ENCODE measurements at regions of chr2 and their contacts with region 1.

Region 1: GRCh38 chr2:96960153-96960961 is 26.0 kb downstream of the FAM178B start:
- ATAC-seq: peak; percentile 89 to 100 (median 99)
- H3K4me3 ChIP-seq: no peak overlapping the region
- H3K27ac ChIP-seq: no peak overlapping the region
- H3K4me1 ChIP-seq: peaks cover 7 to 28% of the 10 kb centered on the region in 2 donors

Region 2: GRCh38 chr2:96164459-96165184 is 795.7 kb before region 1 on chr2:
- in situ Hi-C with region 1: no loop called
- ATAC-seq: peak in 5 of 8 experiments; percentile 54 to 88 (median 85)
- H3K4me3 ChIP-seq: no peak overlapping the region
- H3K27ac ChIP-seq: no peak overlapping the region
- H3K4me1 ChIP-seq: peaks cover 0 to 7% of the 10 kb centered on the region in 2 donors

Region 3: DNA sequence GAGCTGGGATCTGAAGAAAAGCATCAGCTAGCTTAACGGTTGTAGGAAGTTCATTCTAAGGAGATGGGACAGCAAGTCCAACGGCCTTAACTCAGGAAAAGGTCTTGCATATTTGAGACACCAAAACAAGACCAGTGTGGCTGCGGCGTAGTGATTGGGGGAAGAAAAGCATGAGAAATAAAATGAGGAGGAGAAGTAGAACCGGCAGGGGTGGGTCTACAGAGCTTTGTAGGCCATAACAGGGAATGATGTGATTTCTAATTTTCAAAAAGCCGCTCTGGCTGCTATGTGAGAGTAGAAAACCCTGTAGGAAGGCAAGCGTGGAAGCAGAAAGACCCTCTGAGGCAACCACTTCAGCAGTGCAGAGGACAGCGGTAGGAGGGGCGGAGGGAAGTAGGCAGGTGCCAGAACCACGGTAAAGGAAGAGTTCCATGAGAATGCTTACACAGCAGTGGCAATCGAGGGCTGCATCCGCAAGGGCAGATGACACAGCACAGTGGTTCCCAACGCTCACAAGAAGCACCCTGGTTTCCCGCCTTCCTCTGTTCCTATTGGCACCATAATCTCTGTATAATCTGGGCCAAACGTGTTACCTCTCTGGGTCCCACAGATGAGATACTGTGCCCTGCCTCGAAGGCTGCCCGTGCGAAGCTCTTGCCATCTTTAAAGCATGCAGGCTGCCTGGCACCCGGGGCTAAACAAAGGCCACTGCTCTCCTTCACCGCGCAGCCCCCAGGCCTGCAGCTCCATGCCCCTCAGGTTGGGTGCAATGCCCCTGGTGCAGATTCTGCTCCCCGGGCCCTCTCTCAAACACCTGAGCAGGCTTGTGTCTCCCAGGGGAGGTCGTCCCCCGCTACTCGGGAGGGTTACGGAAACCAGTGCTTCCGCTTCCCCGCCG is 103.3 kb before region 1 on chr2:
- in situ Hi-C with region 1: loop called in 8 of 9 experiments (anchors 10 to 25 kb)
- ATAC-seq: no peak
- H3K4me3 ChIP-seq: peak overlapping the region; percentile 56 to 92 (median 59)
- H3K27ac ChIP-seq: peak overlapping the region; percentile 68 to 83
- H3K4me1 ChIP-seq: peaks cover 8 to 15% of the 10 kb centered on the region in 2 donors

Region 4: GRCh38 chr2:96868555-96869280 is 91.6 kb before region 1 on chr2:
- in situ Hi-C with region 1: loop called in 5 of 9 experiments (anchors 10 to 25 kb)
- ATAC-seq: peak; percentile 39 to 67 (median 56)
- H3K4me3 ChIP-seq: peak overlapping the region; percentile 88 to 98 (median 93)
- H3K27ac ChIP-seq: peak overlapping the region; percentile 96 to 97
- H3K4me1 ChIP-seq: peaks cover 11 to 14% of the 10 kb centered on the region in 2 donors

Region 5: DNA sequence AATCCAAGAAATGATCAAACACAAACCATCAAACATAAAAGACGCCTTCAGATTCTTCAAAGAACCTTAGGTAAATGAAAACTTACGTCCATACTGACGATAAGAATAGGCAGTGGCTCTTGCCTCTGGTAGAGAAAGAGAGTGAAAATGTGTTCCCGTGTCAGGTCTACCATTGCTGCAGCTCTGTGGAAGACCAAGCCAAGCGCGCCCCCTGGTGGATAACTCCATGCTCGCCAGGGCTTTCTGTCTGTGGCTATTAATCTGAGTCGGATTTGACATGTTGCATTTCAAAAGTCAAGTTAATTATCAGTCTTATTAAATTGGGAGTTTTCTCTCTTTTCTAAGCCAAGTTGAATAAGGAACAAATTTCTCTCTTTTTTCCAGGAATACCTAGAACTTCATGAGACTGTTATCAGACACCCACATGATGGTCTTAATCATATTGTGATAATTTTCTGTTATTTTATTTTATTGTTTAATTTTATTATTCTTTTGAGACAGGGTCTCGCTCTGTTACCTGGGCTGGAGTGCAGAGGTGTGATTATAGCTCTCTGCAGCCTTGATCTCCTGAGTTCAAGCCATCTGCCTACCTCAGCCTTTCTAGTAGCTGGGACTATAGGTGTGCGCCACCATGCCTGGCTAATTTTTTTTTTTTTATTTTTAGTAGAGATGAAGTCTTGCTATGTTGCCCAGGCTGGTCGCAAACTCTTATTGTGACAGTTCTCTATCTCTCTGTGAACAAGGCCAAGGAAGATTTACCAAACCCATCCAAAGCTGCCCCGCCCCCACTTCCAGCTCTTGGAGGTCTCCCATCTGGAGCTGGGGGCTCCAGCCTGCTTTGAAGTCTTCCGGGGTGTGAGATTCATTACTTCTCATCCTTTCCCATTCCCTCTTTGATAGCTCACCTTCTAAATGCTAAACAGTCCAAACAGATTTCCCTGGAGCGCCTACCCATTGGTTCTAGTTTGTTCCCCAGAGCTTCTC is 737.2 kb after region 1 on chr2:
- in situ Hi-C with region 1: no loop called
- ATAC-seq: peak; percentile 68 to 94 (median 87)
- H3K4me3 ChIP-seq: no peak overlapping the region
- H3K27ac ChIP-seq: no peak overlapping the region
- H3K4me1 ChIP-seq: peaks cover 2 to 5% of the 10 kb centered on the region in 2 donors

Measured in motor neuron (in vitro differentiated cells).